ENCODE measurements at regions of chr19 and their contacts with region 1.

Region 1: GRCh38 chr19:51158474-51159129 is 16.5 kb downstream of the SIGLEC7 start:
- DNase-seq: peak in 3 of 5 donors; percentile 49 to 78 (median 57)
- ATAC-seq: peak; percentile 34 to 60 (median 42)
- H3K4me3 ChIP-seq: no peak overlapping the region
- H3K27ac ChIP-seq: no peak overlapping the region
- H3K4me1 ChIP-seq: peaks cover 0 to 4% (median 0%) of the 10 kb centered on the region in 12 donors
- H3K27me3 ChIP-seq: peaks cover 0 to 27% (median 0%) of the 10 kb centered on the region in 9 donors
- CTCF ChIP-seq: peak; percentile 26 to 74 (median 50)
- POLR2A ChIP-seq: no peak

Region 2: DNA sequence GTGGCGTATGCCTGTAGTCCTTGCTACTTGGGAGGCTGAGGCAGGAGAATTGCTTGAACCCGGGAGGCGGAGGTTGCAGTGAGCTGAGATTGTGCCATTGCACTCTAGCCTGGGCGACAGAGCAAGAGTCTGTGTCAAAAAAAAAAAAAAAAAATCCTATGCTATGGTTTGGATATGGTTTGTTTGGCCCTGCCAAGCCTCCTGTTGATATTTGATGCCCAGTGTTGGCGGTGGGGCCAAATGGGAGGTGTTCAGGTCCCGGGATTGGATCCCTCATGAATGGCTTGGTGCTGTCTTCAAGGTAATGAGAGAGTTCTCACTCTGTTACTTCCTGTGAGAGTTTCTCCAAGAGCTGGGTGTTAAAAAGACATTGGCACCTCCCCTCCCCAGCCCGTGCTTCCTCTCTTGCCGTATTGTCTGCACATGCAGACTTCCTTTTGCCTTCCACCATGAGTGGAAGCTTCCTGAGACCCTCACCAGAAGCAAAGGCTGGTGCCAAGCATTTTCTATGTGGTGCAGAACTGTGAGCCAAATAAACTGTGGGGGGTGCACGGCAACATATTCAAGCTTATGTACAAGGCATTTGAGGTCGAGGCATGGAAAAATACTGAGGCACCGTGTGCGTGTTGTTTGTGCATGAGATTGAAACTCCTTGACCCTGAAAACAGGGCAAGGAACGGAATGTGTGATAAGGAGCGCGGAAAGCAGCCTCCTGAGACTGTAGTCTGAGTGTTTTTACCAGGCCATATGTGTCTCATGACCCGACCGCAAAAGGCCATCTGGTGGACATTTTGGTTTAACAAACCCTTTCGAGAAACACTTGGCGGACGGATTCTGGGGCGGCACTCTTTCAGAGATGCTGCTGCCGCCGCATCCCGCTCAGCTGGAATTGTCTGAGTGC is 26.6 kb before region 1 on chr19:
- intact Hi-C with region 1: no loop called
- DNase-seq: peak in 4 of 5 donors; percentile 57 to 74 (median 67)
- ATAC-seq: peak; percentile 57 to 80 (median 64)
- H3K4me3 ChIP-seq: peak overlapping the region in 3 of 12 donors; percentile 6 to 32 (median 9)
- H3K27ac ChIP-seq: peak overlapping the region in 10 of 12 donors; percentile 9 to 86 (median 44)
- H3K4me1 ChIP-seq: peaks cover 0 to 89% (median 4%) of the 10 kb centered on the region in 12 donors
- H3K27me3 ChIP-seq: peaks cover 0 to 8% (median 0%) of the 10 kb centered on the region in 9 donors
- CTCF ChIP-seq: peak in 2 of 12 donors; percentile 13 to 36
- POLR2A ChIP-seq: no peak

Region 3: GRCh38 chr19:51259348-51260245 is 101.0 kb after region 1 on chr19:
- intact Hi-C with region 1: loop called in 2 of 10 experiments (anchors 2 to 10 kb)
- DNase-seq: peak in 2 of 5 donors; percentile 12 to 25
- ATAC-seq: peak in 1 of 4 donors; percentile 55
- H3K4me3 ChIP-seq: no peak overlapping the region
- H3K27ac ChIP-seq: no peak overlapping the region
- H3K4me1 ChIP-seq: peaks cover 0 to 14% (median 0%) of the 10 kb centered on the region in 12 donors
- H3K27me3 ChIP-seq: peaks cover 0 to 27% (median 5%) of the 10 kb centered on the region in 9 donors
- CTCF ChIP-seq: peak; percentile 25 to 63 (median 52)
- POLR2A ChIP-seq: no peak

Region 4: GRCh38 chr19:51311351-51312257 is 153.0 kb after region 1 on chr19 and contains the start of gene IGLON5:
- intact Hi-C with region 1: no loop called
- DNase-seq: no peak
- ATAC-seq: no peak
- H3K4me3 ChIP-seq: no peak within 1 kb of the TSS
- H3K27ac ChIP-seq: no peak within 1 kb of the TSS
- H3K4me1 ChIP-seq: peaks cover 0 to 8% (median 0%) of the 10 kb centered on the region in 12 donors
- H3K27me3 ChIP-seq: peaks cover 4 to 64% (median 31%) of the 10 kb centered on the region in 9 donors
- CTCF ChIP-seq: no peak
- POLR2A ChIP-seq: no peak
- total RNA-seq, gene IGLON5: 0.09 TPM in 1 of 9 donors, not detected in the others

Measured in heart left ventricle (tissue), 16 donors.